ENCODE measurements at regions of chr1 and their contacts with region 1.

Region 1: DNA sequence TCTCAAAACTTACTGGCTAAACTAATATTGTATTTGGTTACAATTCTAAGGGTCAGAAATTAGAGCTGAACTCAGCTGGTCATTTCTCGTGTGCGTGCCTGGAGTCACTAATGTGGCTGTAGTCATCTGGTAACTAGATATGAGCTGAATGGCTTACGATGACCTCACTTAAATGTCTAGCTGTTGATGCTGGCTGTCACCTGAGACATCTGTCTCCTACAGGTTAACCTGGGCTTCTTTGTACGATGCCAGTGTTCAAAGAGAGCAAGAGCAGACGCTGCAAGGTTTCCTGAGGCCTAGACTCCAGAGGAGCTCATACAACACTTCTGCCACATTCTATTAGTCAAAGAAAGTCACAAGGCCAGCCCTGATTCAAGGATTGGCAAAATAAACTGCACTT is 17.1 kb upstream of the ALG6 start:
- DNase-seq: no peak
- H3K4me3 ChIP-seq: no peak overlapping the region
- CTCF ChIP-seq: no peak

Region 2: DNA sequence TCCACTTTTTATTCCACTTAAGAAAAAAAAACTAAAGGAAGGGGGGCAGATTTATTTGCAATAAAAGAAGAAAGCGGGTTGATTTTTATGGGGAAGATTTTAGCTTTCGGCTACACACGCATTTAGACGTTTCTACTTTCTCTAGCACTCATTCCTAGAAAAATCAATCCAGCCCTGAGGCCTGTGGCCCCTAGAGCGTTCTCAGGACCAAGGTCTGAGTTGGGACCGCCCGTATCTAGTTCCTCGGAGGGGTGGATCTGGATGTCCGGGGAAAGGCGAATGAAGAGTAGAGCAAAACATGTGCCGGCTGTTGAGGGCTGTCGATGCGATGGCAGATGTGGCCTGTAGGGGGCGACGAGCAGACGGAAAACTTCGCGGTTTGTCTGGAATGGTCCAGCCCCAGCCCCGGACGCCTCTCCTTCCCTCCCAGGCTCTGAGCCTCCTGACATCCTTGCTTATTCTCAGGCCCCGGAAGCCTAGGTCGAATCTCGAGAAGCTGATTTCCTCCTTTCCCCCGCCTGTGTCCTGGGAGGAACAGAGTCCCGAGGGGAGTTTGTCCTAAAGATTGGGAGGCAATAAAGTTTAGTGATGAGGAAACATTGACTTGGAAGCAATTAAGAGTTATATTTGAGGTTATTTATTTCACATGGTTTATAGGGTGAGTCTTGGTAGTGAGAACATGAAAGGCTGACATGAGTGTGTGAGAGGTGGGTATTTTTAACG is 22.7 kb before region 1 on chr1:
- CTCF ChIA-PET with region 1: interaction called, 10 read pairs
- POLR2A ChIA-PET with region 1: no interaction called
- DNase-seq: no peak
- H3K4me3 ChIP-seq: no peak overlapping the region
- CTCF ChIP-seq: peak; percentile 85

Region 3: GRCh38 chr1:63367215-63368103 is 17.1 kb after region 1 on chr1 and contains the start of gene ALG6:
- CTCF ChIA-PET with region 1: no interaction called
- POLR2A ChIA-PET with region 1: no interaction called
- DNase-seq: peak; percentile 23
- H3K4me3 ChIP-seq: peak within 1 kb of the TSS; percentile 97
- CTCF ChIP-seq: peak; percentile 29